ENCODE measurements at regions of chr3 and their contacts with region 1.

Region 1: DNA sequence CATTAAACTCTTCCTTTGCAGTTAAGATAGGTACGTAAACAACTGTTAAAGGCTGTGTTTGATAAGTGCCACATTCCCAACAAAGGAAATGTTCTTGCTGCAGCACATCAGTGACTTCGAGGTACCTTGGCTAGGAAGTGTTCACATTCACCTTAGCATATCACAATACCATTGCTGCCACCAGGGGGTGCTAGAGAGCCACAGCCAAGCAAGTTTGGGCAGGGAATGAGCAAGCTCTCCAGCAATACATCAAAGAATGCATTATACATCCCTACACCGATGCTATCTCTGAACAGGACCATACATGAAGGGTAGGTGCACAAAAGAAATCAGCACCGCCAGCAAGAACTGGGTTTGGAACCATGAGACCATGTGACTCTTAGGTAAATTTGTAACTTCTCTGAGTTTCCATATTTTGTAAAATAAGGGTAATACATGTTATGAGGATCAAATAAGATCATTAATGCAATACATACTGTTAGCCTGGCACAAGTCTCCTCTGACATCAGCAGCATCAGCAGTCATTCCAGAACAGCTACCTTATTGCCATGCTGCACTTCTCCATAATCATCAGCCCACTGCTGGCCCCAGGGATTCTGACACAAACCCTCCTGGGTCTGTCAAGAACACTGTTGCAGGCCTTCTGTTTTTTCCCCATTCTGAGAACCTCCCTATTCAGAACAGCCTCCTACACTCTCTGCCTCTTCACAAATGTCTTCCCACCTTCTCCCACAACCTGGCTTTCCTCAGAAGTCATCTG is 37.6 kb downstream of the RYK start:
- DNase-seq: peak; percentile 83 to 92
- ATAC-seq: peak; percentile 90
- H3K4me3 ChIP-seq: no peak overlapping the region
- H3K27ac ChIP-seq: no peak overlapping the region
- H3K4me1 ChIP-seq: no peaks in the 10 kb centered on the region
- H3K27me3 ChIP-seq: no peaks in the 10 kb centered on the region

Region 2: DNA sequence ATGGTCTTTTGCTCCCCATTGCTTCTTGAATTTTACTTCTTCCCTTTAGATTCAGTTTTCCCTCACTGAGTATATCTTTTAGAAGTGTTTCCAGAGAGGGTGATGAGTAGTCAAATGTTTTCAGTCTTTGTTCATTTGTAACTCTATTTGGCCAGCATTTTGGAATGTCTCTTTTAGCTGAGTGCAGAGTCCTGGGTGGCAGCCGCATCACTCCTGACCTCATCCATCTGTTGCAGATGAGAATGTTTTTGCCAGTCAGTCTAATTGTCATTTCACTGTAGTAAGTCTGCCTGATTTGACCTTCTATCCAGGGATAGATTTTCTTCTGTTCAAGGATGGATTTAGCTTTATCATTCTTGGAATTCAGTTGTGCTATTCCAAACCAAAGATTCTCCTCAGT is 400.2 kb before region 1 on chr3:
- intact Hi-C with region 1: loop called in 1 of 2 experiments (anchors 10 kb)
- DNase-seq: no peak
- ATAC-seq: no peak
- H3K4me3 ChIP-seq: no peak overlapping the region
- H3K27ac ChIP-seq: no peak overlapping the region
- H3K4me1 ChIP-seq: no peaks in the 10 kb centered on the region
- H3K27me3 ChIP-seq: no peaks in the 10 kb centered on the region

Region 3: GRCh38 chr3:134299185-134299887 is 86.2 kb after region 1 on chr3:
- intact Hi-C with region 1: loop called (anchors 2 kb)
- DNase-seq: peak in 1 of 2 donors; percentile 30
- ATAC-seq: peak; percentile 73
- H3K4me3 ChIP-seq: no peak overlapping the region
- H3K27ac ChIP-seq: no peak overlapping the region
- H3K4me1 ChIP-seq: no peaks in the 10 kb centered on the region
- H3K27me3 ChIP-seq: no peaks in the 10 kb centered on the region

Region 4: GRCh38 chr3:134473868-134474546 is 260.9 kb after region 1 on chr3:
- intact Hi-C with region 1: loop called (anchors 5 kb)
- DNase-seq: peak; percentile 69 to 83
- ATAC-seq: peak; percentile 82
- H3K4me3 ChIP-seq: no peak overlapping the region
- H3K27ac ChIP-seq: no peak overlapping the region
- H3K4me1 ChIP-seq: no peaks in the 10 kb centered on the region
- H3K27me3 ChIP-seq: no peaks in the 10 kb centered on the region